RWPE1 (cell line): ENCODE measurements at regions of chr3 and their contacts with region 1.

Region 1: DNA sequence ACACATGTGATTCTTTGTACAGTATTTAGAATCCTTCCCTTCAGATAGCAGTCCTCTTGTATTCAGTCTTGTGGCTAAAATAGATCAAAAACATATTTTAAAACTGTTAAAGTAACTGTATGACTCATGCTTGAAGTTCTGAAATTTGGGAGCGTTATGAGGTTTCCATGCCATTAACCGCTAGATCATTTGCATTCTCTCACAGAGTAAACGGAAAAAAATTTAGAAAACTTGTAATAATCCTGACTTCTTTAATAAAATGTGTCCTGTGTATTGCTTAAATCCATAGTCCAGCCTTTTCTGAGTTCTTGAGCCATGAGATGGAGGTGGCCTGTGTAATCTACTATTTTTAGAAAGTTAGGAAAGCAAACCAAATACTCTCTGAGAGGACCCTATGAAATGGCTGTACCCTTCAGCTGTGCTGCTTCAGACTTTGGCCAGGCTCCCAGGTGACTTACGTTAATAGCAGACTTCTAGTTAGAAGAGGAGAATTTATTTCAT is 33.8 kb downstream of the MBNL1 start:
- DNase-seq: no peak
- H3K27ac ChIP-seq: no peak overlapping the region
- CTCF ChIP-seq: no peak

Region 2: DNA sequence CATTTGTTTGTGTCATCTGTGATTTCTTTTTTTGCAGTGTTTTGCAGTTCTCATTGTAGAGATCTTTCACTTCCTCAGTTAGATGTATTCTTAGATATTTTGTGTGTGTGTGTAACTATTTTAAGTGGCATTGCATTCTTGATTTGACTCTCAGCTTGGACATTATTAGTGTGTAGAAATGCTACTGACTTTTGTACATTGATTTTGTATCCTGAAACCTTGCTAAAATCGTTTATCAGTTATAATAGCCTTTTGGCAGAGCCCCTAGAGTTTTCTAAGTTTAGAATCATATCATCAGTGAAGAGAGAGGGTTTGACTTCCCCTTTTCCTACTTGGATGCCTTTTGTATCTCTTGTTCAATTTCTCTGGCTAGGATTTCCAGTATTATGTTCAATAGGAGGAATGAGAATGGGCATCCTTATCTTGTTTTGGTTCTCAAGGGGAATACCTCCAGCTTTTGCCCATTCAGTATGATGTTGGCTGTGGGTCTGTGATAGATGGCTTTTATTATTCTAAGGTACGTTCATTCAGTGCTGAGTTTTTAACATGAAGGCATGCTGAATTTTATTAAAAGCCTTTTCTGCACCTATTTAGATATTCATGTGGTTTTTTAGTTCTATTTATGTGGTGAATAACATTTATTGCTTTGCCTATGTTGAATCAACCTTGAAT is 177.8 kb after region 1 on chr3:
- CTCF ChIA-PET with region 1: interaction called, 10 read pairs
- POLR2A ChIA-PET with region 1: no interaction called
- DNase-seq: no peak
- H3K27ac ChIP-seq: no peak overlapping the region
- CTCF ChIP-seq: no peak